GM12878 (cell line): ENCODE measurements at regions of chr1 and their contacts with region 1.

Region 1: GRCh38 chr1:248324468-248324867 is at the start of gene OR2M7:
- DNase-seq: no peak
- ATAC-seq: no peak
- H3K4me3 ChIP-seq: no peak within 1 kb of the TSS
- H3K27ac ChIP-seq: no peak within 1 kb of the TSS
- H3K4me1 ChIP-seq: no peaks in the 10 kb centered on the region
- H3K27me3 ChIP-seq: no peaks in the 10 kb centered on the region
- CTCF ChIP-seq: no peak
- EP300 ChIP-seq: no peak
- POLR2A ChIP-seq: no peak
- RAD21 ChIP-seq: no peak
- polyA plus RNA-seq, gene OR2M7: not detected

Region 2: GRCh38 chr1:248229360-248229908 is 95.0 kb before region 1 on chr1:
- CTCF ChIA-PET with region 1: no interaction called
- POLR2A ChIA-PET with region 1: no interaction called
- RAD21 ChIA-PET with region 1: no interaction called
- SMC1A ChIA-PET with region 1: no interaction called
- in situ Hi-C with region 1: no loop called
- intact Hi-C with region 1: no loop called
- DNase-seq: no peak
- ATAC-seq: peak; percentile 56
- H3K4me3 ChIP-seq: no peak overlapping the region
- H3K27ac ChIP-seq: no peak overlapping the region
- H3K4me1 ChIP-seq: no peaks in the 10 kb centered on the region
- H3K27me3 ChIP-seq: no peaks in the 10 kb centered on the region
- CTCF ChIP-seq: 0 out of 6 replicates have a peak, but pooled peaks of 1 of the 3 experiments have one; percentile 5
- EP300 ChIP-seq: no peak
- POLR2A ChIP-seq: no peak
- RAD21 ChIP-seq: no peak

Region 3: GRCh38 chr1:248251530-248251929 is 72.9 kb before region 1 on chr1:
- CTCF ChIA-PET with region 1: no interaction called
- POLR2A ChIA-PET with region 1: no interaction called
- RAD21 ChIA-PET with region 1: no interaction called
- SMC1A ChIA-PET with region 1: no interaction called
- in situ Hi-C with region 1: no loop called
- intact Hi-C with region 1: no loop called
- DNase-seq: no peak
- ATAC-seq: no peak
- H3K4me3 ChIP-seq: no peak overlapping the region
- H3K27ac ChIP-seq: no peak overlapping the region
- H3K4me1 ChIP-seq: no peaks in the 10 kb centered on the region
- H3K27me3 ChIP-seq: no peaks in the 10 kb centered on the region
- CTCF ChIP-seq: no peak
- EP300 ChIP-seq: no peak
- POLR2A ChIP-seq: no peak
- RAD21 ChIP-seq: no peak

Region 4: GRCh38 chr1:248393050-248393449 is 68.6 kb after region 1 on chr1:
- CTCF ChIA-PET with region 1: no interaction called
- POLR2A ChIA-PET with region 1: no interaction called
- RAD21 ChIA-PET with region 1: no interaction called
- SMC1A ChIA-PET with region 1: no interaction called
- in situ Hi-C with region 1: no loop called
- intact Hi-C with region 1: loop called (anchors 2 kb)
- DNase-seq: no peak
- ATAC-seq: no peak
- H3K4me3 ChIP-seq: no peak overlapping the region
- H3K27ac ChIP-seq: no peak overlapping the region
- H3K4me1 ChIP-seq: no peaks in the 10 kb centered on the region
- H3K27me3 ChIP-seq: no peaks in the 10 kb centered on the region
- CTCF ChIP-seq: no peak
- EP300 ChIP-seq: no peak
- POLR2A ChIP-seq: no peak
- RAD21 ChIP-seq: no peak

Region 5: DNA sequence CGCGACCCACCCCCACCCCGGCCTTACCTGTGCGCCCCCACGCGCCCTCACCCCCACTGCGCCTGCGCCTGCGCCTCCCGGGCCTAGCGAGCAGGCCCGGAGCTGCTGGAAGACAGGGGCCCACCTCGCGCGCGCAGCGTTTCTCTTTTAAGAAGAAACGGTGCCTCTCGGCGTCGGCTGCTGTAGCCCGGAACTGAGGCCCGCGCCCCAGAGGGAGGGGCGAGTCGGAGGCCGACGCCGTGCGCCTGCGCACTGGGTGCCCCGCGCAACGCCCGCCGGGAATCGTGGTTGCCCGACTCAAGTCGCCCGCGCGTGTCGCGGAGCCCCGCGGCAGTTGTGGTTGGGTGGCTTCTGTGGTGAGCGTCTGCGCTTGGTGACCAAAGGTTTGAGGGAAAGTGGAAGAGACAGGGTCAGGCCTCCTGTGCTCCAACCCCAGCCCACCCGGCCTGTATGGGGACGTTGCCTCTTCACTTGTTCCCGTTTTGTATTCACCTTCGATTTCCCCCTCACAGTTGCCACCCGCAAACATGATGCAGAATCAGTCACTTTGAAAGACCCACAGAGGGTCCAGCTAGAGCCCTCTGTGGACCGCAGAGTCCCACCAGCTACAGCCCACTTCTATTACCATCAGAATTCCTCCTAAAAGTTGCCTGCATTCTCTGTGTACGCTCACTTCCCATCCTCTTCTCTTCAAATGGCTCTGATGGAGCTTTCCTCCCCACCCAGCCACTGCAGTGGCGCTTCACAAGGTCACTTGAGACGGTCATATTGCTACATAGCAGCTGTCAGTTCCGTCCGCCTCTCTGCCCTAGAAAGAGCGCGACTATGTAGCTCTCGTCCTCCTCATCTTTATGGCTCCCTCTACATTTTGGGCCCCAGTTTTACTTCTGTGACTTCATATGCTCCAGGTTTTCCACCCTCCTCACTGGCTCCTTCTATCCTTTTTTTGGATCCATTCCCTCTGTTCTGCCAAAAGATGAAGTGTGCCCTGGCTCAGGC is 534.7 kb after region 1 on chr1 and contains the start of gene ZNF692:
- CTCF ChIA-PET with region 1: no interaction called
- POLR2A ChIA-PET with region 1: no interaction called
- RAD21 ChIA-PET with region 1: no interaction called
- SMC1A ChIA-PET with region 1: no interaction called
- in situ Hi-C with region 1: no loop called
- intact Hi-C with region 1: no loop called
- DNase-seq: peak; percentile 85
- ATAC-seq: peak; percentile 86
- H3K4me3 ChIP-seq: peak within 1 kb of the TSS; percentile 95
- H3K27ac ChIP-seq: peak within 1 kb of the TSS; percentile 82
- H3K4me1 ChIP-seq: peaks cover 11% of the 10 kb centered on the region
- H3K27me3 ChIP-seq: no peaks in the 10 kb centered on the region
- CTCF ChIP-seq: no peak
- EP300 ChIP-seq: no peak
- POLR2A ChIP-seq: peak; percentile 91
- RAD21 ChIP-seq: no peak
- polyA plus RNA-seq, gene ZNF692: 5.3 to 18.5 TPM